ENCODE measurements at regions of chr5 and their contacts with region 1.

Region 1: GRCh38 chr5:131536211-131536826 is 98.7 kb downstream of the RAPGEF6 start:
- DNase-seq: peak; percentile 72
- H3K4me3 Mint-ChIP-seq: peak overlapping the region; percentile 65
- H3K27ac Mint-ChIP-seq: peak overlapping the region; percentile 79
- H3K4me1 Mint-ChIP-seq: peaks cover 61% of the 10 kb centered on the region
- H3K27me3 Mint-ChIP-seq: no peaks in the 10 kb centered on the region

Region 2: DNA sequence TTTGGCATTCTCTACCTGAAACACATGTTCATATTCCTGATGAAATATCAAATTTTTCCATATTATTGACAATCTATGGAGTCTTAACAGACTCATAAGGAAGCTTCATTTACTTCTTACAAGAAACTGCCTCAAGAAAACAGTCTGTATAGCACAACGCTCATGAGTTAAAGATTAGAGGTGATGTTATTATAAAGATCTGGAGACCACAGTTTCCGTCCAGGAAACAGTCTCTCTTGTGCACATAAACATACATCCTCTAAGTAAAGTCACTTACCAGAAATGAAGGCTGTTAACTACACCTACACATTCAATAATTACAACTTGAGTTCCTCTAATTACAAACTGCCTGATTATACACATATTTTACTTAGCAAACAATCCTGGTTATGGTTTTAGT is 11.9 kb after region 1 on chr5:
- intact Hi-C with region 1: loop called (anchors 1 kb)
- DNase-seq: peak; percentile 80
- H3K4me3 Mint-ChIP-seq: peak overlapping the region; percentile 87
- H3K27ac Mint-ChIP-seq: peak overlapping the region; percentile 92
- H3K4me1 Mint-ChIP-seq: peaks cover 62% of the 10 kb centered on the region
- H3K27me3 Mint-ChIP-seq: no peaks in the 10 kb centered on the region